Upper lobe of right lung (tissue), 1 donor: ENCODE measurements at regions of chr16 and their contacts with region 1.

Region 1: DNA sequence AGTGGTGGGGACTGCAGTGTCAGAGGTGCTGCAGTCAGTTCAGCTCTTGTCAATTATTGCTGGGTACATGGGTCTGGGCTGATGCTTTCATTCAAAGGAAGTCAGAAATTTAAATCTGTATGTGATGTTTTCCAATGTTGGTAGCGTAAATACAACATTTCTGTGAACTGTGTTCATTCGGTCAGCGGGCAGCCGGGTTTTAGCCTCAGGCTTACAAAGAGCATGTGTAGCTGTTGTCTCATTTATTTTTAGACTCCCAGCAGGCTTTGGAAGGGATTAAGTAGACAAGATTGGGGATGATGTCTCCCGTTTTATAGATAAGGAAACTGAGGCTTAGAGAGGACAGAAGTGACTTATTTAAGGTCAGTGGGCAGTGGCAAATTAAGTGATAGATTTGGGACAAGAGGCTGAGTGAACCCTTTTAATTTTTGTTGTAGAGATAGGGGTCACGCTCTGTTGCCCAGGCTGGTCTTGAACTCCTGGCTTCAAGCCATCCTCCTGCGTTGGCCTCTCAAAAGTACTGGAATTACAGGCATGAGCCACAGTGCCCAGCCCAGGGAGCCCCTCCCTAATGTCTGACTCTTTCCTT is 8.1 kb downstream of the AQP8 start:
- DNase-seq: no peak
- ATAC-seq: no peak
- H3K4me3 ChIP-seq: no peak overlapping the region
- H3K27ac ChIP-seq: no peak overlapping the region
- H3K4me1 ChIP-seq: no peaks in the 10 kb centered on the region
- H3K27me3 ChIP-seq: no peaks in the 10 kb centered on the region
- CTCF ChIP-seq: no peak

Region 2: DNA sequence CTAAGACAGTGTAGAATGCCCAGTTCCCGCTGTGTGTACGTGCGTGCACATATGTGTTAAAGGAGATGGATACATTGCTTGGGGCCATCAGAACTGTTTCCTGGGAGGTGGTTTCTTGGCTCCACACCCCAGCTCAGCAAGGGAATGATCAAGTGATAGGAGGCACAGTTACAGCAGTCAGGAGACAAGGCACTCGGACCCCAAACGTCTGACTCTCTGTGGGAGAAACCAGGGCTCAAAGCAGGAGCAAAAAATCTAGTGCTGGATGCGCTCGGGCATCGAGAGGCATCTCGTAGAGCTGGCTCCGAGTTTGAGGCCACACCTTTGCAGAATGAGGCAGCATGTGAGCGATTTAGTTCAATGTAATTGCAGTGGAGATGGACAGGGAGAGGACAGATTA is 613.5 kb before region 1 on chr16:
- intact Hi-C with region 1: no loop called
- DNase-seq: no peak
- ATAC-seq: no peak
- H3K4me3 ChIP-seq: no peak overlapping the region
- H3K27ac ChIP-seq: no peak overlapping the region
- H3K4me1 ChIP-seq: peaks cover 9% of the 10 kb centered on the region
- H3K27me3 ChIP-seq: peaks cover 36% of the 10 kb centered on the region
- CTCF ChIP-seq: no peak

Region 3: GRCh38 chr16:24988593-24989338 is 236.1 kb before region 1 on chr16:
- intact Hi-C with region 1: no loop called
- DNase-seq: no peak
- ATAC-seq: no peak
- H3K4me3 ChIP-seq: no peak overlapping the region
- H3K27ac ChIP-seq: peak overlapping the region; percentile 26
- H3K4me1 ChIP-seq: peaks cover 67% of the 10 kb centered on the region
- H3K27me3 ChIP-seq: no peaks in the 10 kb centered on the region
- CTCF ChIP-seq: no peak

Region 4: DNA sequence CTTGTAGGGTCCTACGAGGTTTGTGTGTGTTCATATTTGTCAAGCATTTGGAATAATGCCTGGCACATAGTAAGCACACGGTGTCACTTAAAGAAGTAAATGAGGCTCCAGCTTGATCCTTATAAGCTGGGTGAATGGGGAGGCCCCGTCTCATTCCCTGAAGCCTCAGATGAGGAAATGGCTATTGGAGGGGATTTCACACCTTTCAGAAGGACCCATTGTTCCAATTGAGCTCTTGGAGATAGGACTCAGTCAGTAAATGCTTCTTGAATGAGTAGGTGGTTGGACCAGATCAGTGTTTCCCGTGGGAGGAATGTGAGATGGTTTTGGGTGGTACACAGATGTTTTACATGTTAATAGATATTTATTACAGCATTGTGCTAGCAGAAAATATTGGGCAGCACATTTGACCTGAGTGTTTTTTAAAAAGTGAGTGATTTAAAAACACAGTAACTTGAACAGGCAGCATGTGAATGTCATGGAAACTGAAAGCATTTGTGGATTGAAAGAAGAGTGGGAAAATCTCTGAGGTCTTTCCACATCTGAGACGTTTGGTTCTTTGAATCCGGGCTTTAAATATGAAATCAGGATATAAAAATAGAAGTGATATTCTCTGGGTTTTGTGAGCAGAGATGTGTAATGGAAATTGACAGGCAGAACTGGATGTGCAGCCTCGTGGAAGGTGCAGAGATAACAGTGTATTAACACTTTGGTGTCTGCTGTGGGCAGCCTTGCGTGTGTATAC is 173.2 kb before region 1 on chr16:
- intact Hi-C with region 1: loop called (anchors 5 kb)
- DNase-seq: no peak
- ATAC-seq: no peak
- H3K4me3 ChIP-seq: peak overlapping the region; percentile 32
- H3K27ac ChIP-seq: peak overlapping the region; percentile 49
- H3K4me1 ChIP-seq: peaks cover 39% of the 10 kb centered on the region
- H3K27me3 ChIP-seq: no peaks in the 10 kb centered on the region
- CTCF ChIP-seq: no peak

Region 5: GRCh38 chr16:25093208-25094061 is 131.4 kb before region 1 on chr16:
- intact Hi-C with region 1: no loop called
- DNase-seq: no peak
- ATAC-seq: peak; percentile 59
- H3K4me3 ChIP-seq: no peak overlapping the region
- H3K27ac ChIP-seq: no peak overlapping the region
- H3K4me1 ChIP-seq: no peaks in the 10 kb centered on the region
- H3K27me3 ChIP-seq: no peaks in the 10 kb centered on the region
- CTCF ChIP-seq: no peak